Activated CD4-positive, alpha-beta T cell treated with anti-CD3 and anti-CD28 coated beads for 36 hours (primary cell): ENCODE measurements at regions of chr11 and their contacts with region 1.

Region 1: DNA sequence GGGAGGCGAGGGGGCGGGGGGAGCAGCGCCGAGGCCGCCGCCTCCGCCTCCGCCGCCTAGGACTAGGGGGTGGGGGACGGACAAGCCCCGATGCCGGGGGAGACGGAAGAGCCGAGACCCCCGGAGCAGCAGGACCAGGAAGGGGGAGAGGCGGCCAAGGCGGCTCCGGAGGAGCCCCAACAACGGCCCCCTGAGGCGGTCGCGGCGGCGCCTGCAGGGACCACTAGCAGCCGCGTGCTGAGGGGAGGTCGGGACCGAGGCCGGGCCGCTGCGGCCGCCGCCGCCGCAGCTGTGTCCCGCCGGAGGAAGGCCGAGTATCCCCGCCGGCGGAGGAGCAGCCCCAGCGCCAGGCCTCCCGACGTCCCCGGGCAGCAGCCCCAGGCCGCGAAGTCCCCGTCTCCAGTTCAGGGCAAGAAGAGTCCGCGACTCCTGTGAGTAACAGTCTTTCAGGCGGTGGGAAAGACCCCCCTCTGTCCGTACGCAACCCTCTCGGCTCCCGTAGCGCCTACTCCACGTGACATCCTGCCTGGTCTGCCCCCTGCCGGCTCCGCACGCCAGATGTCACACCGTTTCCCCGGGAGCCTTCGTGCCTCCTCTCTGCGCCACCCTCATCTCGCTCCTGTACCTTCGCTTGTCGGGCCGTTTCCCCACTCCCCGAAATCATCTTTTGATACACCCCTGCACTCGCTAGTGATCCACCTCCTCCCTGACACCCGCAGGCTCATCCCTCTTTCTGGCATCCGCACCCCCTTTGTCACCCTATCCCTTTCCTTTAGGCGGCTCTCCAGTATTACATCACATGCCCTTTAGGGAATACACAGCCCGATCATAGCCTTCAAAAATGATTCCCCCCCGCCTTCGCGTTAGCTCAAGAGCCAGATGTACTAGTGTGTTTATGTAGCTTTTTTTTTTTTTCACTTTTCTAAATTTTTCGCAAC is 598 bp downstream of the ZFP91 start:
- DNase-seq: peak; percentile 96
- ATAC-seq: peak; percentile 33
- H3K4me3 Mint-ChIP-seq: peak overlapping the region; percentile 89
- H3K27ac Mint-ChIP-seq: peak overlapping the region; percentile 99
- H3K4me1 Mint-ChIP-seq: peaks cover 44% of the 10 kb centered on the region
- H3K27me3 Mint-ChIP-seq: no peaks in the 10 kb centered on the region

Region 2: DNA sequence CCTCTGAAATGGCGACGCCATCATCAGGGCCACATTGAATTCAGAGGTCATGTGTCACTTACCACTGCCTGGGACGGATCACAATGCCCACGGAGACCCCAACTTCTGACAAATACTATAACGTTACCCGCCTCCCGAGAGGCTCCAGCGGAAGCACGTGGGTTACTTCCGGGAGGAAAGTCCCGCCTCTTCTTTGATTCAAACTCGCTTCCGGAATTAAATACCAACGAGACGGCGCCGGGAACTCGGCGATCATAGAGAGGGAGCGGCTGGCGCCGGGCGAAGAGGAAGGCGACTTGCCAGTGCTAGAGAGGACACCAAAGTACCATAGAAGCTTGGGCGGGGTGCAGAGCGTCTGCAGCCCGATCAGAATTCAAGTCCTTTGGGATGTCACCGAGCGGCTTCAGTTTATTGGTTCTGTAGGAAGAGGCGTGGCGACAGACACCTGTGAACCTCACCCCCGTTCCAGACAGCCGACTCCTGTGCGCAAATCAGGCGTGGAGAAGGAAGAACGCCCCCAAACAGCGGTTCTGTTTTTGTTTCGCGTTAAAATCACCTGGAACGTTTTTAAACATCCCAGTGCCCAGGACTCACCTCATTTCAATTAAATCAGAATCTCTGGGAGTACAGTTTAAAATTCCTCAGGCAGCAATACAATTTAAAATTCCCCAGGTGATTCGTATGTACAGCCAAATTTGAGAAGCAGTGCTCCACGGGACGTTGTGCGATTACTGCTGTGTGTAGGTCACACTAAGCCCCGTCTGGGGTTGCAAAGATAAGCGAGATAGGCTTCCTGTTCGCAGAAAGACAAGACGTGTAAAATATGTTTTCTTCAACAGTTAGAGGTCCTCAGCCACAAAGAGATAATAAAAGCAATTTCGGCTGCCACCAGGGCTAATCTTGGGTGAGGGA is 1048.6 kb before region 1 on chr11 and contains the start of gene TIMM10:
- CTCF ChIA-PET with region 1: no interaction called
- POLR2A ChIA-PET with region 1: no interaction called
- intact Hi-C with region 1: loop called in 1 of 2 experiments (anchors 2 kb)
- DNase-seq: peak; percentile 97
- ATAC-seq: peak; percentile 95
- H3K4me3 Mint-ChIP-seq: peak within 1 kb of the TSS; percentile 81
- H3K27ac Mint-ChIP-seq: peak within 1 kb of the TSS; percentile 87
- H3K4me1 Mint-ChIP-seq: peaks cover 37% of the 10 kb centered on the region
- H3K27me3 Mint-ChIP-seq: no peaks in the 10 kb centered on the region
- total RNA-seq, gene TIMM10: 124 to 158 TPM

Region 3: GRCh38 chr11:57712256-57713150 is 867.0 kb before region 1 on chr11 and contains the start of gene TMX2:
- CTCF ChIA-PET with region 1: no interaction called
- POLR2A ChIA-PET with region 1: no interaction called
- intact Hi-C with region 1: loop called (anchors 1 to 2 kb)
- DNase-seq: peak; percentile 94
- ATAC-seq: peak; percentile 93
- H3K4me3 Mint-ChIP-seq: peak within 1 kb of the TSS; percentile 97
- H3K27ac Mint-ChIP-seq: peak within 1 kb of the TSS; percentile 97
- H3K4me1 Mint-ChIP-seq: peaks cover 50% of the 10 kb centered on the region
- H3K27me3 Mint-ChIP-seq: no peaks in the 10 kb centered on the region
- total RNA-seq, gene TMX2: 59.8 to 72.5 TPM

Region 4: DNA sequence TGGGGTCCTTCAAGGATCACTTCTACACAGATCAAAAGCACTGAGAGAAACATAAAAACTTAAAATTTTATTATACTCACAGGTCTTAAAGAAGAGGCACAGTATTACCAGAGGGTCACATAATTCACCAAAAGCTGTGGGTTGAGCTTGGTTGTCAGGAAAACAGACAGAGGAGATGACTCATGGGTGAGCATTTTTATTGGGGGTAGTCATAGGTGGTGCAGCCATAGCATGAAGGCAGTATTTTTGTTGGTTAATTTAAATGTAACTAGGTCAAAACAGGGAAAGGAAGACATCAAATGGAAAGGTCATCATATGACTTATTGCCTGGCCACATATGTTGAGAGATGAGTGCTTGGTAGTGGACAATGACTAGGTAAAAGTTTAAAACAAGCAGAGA is 244.8 kb before region 1 on chr11:
- CTCF ChIA-PET with region 1: no interaction called
- POLR2A ChIA-PET with region 1: no interaction called
- intact Hi-C with region 1: no loop called
- DNase-seq: no peak
- ATAC-seq: no peak
- H3K4me3 Mint-ChIP-seq: no peak overlapping the region
- H3K27ac Mint-ChIP-seq: no peak overlapping the region
- H3K4me1 Mint-ChIP-seq: no peaks in the 10 kb centered on the region
- H3K27me3 Mint-ChIP-seq: peaks cover 13% of the 10 kb centered on the region

Region 5: DNA sequence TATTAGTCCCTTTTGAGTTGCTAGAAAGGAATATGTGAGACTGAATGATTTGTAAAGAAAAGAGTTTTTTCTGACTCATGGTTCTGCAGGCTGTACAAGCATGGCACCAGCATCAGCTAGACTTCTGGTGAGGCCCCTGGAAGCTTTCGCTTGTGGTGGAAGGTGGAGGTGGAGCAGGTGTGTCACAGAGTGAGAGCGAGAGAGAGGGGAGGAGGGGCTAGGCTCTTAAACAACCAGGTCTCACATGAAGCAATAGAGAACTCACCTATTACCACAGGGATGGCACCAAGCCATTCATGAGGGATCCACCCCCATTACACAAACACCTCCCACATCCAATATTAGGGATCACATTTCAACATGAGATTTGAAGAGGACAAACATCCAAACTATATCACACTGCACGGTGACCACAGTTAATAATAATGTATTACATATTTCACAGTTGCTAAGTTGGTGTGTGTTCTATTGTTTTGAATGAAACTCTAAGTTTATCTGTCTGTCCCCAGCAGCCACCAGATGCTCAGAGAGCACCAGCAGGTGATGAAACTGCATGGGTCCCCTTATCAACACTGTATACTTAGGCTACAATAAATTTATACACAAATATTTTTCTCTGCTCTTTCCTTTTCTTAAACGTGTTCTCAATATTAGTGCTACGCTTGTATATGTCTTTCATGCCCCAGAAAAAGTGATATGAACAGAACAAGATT is 13.5 kb after region 1 on chr11:
- CTCF ChIA-PET with region 1: interaction called, 20 read pairs
- POLR2A ChIA-PET with region 1: interaction called, 23 read pairs
- intact Hi-C with region 1: loop called (anchors 1 kb)
- DNase-seq: peak; percentile 78
- ATAC-seq: peak; percentile 91
- H3K4me3 Mint-ChIP-seq: peak overlapping the region; percentile 0
- H3K27ac Mint-ChIP-seq: peak overlapping the region; percentile 84
- H3K4me1 Mint-ChIP-seq: peaks cover 82% of the 10 kb centered on the region
- H3K27me3 Mint-ChIP-seq: no peaks in the 10 kb centered on the region

Region 6: GRCh38 chr11:58675334-58676155 is 96.1 kb after region 1 on chr11:
- CTCF ChIA-PET with region 1: interaction called, 4 read pairs
- POLR2A ChIA-PET with region 1: no interaction called
- intact Hi-C with region 1: loop called (anchors 1 to 2 kb)
- DNase-seq: peak; percentile 88
- ATAC-seq: peak; percentile 94
- H3K4me3 Mint-ChIP-seq: no peak overlapping the region
- H3K27ac Mint-ChIP-seq: no peak overlapping the region
- H3K4me1 Mint-ChIP-seq: no peaks in the 10 kb centered on the region
- H3K27me3 Mint-ChIP-seq: no peaks in the 10 kb centered on the region

Region 7: DNA sequence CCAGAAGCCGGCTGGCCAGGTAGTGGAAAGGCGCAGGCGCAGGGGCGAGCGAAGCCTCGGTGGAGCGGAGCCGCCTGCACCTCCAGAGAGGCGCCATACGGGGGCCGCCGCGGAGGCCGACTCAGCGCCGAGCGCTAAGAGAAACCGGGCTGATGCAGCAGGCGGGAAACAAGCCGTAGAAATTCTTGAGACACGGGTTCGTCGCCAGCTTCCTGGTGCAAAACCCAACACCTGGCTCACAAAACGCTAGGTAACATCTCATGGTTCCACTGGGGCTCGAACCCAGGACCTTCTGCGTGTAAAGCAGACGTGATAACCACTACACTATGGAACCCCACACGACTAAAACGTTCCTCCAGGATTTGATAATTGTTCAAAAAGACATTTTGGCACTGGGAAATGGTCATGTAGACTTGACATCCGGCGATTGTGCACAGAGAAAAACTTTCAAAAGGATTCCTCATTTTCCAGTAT is 970.9 kb after region 1 on chr11:
- CTCF ChIA-PET with region 1: no interaction called
- POLR2A ChIA-PET with region 1: no interaction called
- intact Hi-C with region 1: loop called in 1 of 2 experiments (anchors 5 kb)
- DNase-seq: peak; percentile 95
- ATAC-seq: peak; percentile 91
- H3K4me3 Mint-ChIP-seq: peak overlapping the region; percentile 79
- H3K27ac Mint-ChIP-seq: peak overlapping the region; percentile 96
- H3K4me1 Mint-ChIP-seq: peaks cover 28% of the 10 kb centered on the region
- H3K27me3 Mint-ChIP-seq: peaks cover 2% of the 10 kb centered on the region

Region 8: GRCh38 chr11:59810189-59810910 is 1230.9 kb after region 1 on chr11 and contains the start of gene MRPL16:
- CTCF ChIA-PET with region 1: no interaction called
- POLR2A ChIA-PET with region 1: no interaction called
- intact Hi-C with region 1: loop called in 1 of 2 experiments (anchors 5 kb)
- DNase-seq: peak; percentile 94
- ATAC-seq: peak; percentile 99
- H3K4me3 Mint-ChIP-seq: peak within 1 kb of the TSS; percentile 88
- H3K27ac Mint-ChIP-seq: peak within 1 kb of the TSS; percentile 88
- H3K4me1 Mint-ChIP-seq: peaks cover 18% of the 10 kb centered on the region
- H3K27me3 Mint-ChIP-seq: no peaks in the 10 kb centered on the region
- total RNA-seq, gene MRPL16: 77.9 to 82.6 TPM